GM12878 (cell line): ENCODE measurements at regions of chr14 and their contacts with region 1.

Region 1: GRCh38 chr14:89430391-89431236 is 13.6 kb upstream of the FOXN3 start:
- DNase-seq: peak; percentile 99
- ATAC-seq: peak; percentile 95
- H3K4me3 ChIP-seq: peak overlapping the region; percentile 29
- H3K27ac ChIP-seq: peak overlapping the region; percentile 97
- H3K4me1 ChIP-seq: peaks cover 49% of the 10 kb centered on the region
- H3K27me3 ChIP-seq: no peaks in the 10 kb centered on the region
- CTCF ChIP-seq: no peak
- EP300 ChIP-seq: peak; percentile 90 to 94
- POLR2A ChIP-seq: peak; percentile 37; the same call in 1 of the 2 replicates
- RAD21 ChIP-seq: peak; percentile 27; the same call in 1 of the 2 replicates

Region 2: GRCh38 chr14:89178802-89179535 is 251.6 kb before region 1 on chr14:
- CTCF ChIA-PET with region 1: interaction called, 7 read pairs
- POLR2A ChIA-PET with region 1: no interaction called
- RAD21 ChIA-PET with region 1: interaction called, 17 read pairs
- SMC1A ChIA-PET with region 1: interaction called, 9 read pairs
- in situ Hi-C with region 1: no loop called
- intact Hi-C with region 1: no loop called
- DNase-seq: no peak
- ATAC-seq: no peak
- H3K4me3 ChIP-seq: no peak overlapping the region
- H3K27ac ChIP-seq: no peak overlapping the region
- H3K4me1 ChIP-seq: peaks cover 8% of the 10 kb centered on the region
- H3K27me3 ChIP-seq: no peaks in the 10 kb centered on the region
- CTCF ChIP-seq: no peak
- EP300 ChIP-seq: no peak
- POLR2A ChIP-seq: no peak
- RAD21 ChIP-seq: no peak

Region 3: GRCh38 chr14:89416002-89416995 is 14.3 kb before region 1 on chr14:
- CTCF ChIA-PET with region 1: interaction called, 9 read pairs
- POLR2A ChIA-PET with region 1: interaction called, 9 read pairs
- RAD21 ChIA-PET with region 1: interaction called, 27 read pairs
- SMC1A ChIA-PET with region 1: interaction called, 5 read pairs
- in situ Hi-C with region 1: no loop called
- intact Hi-C with region 1: no loop called
- DNase-seq: peak; percentile 94
- ATAC-seq: peak; percentile 85
- H3K4me3 ChIP-seq: peak overlapping the region; percentile 85
- H3K27ac ChIP-seq: peak overlapping the region; percentile 91
- H3K4me1 ChIP-seq: peaks cover 6% of the 10 kb centered on the region
- H3K27me3 ChIP-seq: no peaks in the 10 kb centered on the region
- CTCF ChIP-seq: no peak
- EP300 ChIP-seq: no peak
- POLR2A ChIP-seq: peak; percentile 31; the same call in 1 of the 2 replicates
- RAD21 ChIP-seq: no peak

Region 4: DNA sequence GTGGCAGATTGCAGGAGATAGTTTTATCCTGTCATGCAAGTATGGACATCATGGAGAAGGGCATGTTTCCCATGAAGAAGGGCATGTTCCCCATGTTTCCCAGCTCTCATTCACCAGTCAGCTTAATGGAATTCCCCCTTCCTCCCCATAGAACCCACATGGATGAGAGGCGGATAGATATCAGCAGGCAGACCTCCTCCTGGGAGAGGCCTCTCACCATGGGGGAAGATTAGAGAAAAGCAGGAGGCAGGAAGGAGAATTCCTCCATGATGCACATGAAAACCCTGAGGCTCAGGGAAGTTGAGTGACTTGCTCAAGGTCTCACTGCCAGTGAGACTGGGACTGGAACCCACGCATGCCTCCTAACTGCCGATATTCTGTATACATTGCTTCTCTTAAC is 79.3 kb after region 1 on chr14:
- CTCF ChIA-PET with region 1: interaction called, 5 read pairs
- POLR2A ChIA-PET with region 1: no interaction called
- RAD21 ChIA-PET with region 1: interaction called, 5 read pairs
- SMC1A ChIA-PET with region 1: interaction called, 5 read pairs
- in situ Hi-C with region 1: no loop called
- intact Hi-C with region 1: loop called (anchors 2 kb)
- DNase-seq: no peak
- ATAC-seq: no peak
- H3K4me3 ChIP-seq: no peak overlapping the region
- H3K27ac ChIP-seq: peak overlapping the region; percentile 69
- H3K4me1 ChIP-seq: peaks cover 35% of the 10 kb centered on the region
- H3K27me3 ChIP-seq: no peaks in the 10 kb centered on the region
- CTCF ChIP-seq: no peak
- EP300 ChIP-seq: no peak
- POLR2A ChIP-seq: no peak
- RAD21 ChIP-seq: no peak

Region 5: GRCh38 chr14:89767861-89768268 is 337.3 kb after region 1 on chr14:
- CTCF ChIA-PET with region 1: no interaction called
- POLR2A ChIA-PET with region 1: interaction called, 3 read pairs
- RAD21 ChIA-PET with region 1: interaction called, 3 read pairs
- SMC1A ChIA-PET with region 1: no interaction called
- in situ Hi-C with region 1: loop called (anchors 5 kb)
- intact Hi-C with region 1: loop called (anchors 2 kb)
- DNase-seq: peak; percentile 65
- ATAC-seq: peak; percentile 94
- H3K4me3 ChIP-seq: no peak overlapping the region
- H3K27ac ChIP-seq: peak overlapping the region; percentile 56
- H3K4me1 ChIP-seq: peaks cover 22% of the 10 kb centered on the region
- H3K27me3 ChIP-seq: no peaks in the 10 kb centered on the region
- CTCF ChIP-seq: peak; percentile 75 to 87 (median 81)
- EP300 ChIP-seq: 0 out of 4 replicates have a peak, but pooled peaks of 1 of the 2 experiments have one; percentile 29
- POLR2A ChIP-seq: no peak
- RAD21 ChIP-seq: peak; percentile 95

Region 6: DNA sequence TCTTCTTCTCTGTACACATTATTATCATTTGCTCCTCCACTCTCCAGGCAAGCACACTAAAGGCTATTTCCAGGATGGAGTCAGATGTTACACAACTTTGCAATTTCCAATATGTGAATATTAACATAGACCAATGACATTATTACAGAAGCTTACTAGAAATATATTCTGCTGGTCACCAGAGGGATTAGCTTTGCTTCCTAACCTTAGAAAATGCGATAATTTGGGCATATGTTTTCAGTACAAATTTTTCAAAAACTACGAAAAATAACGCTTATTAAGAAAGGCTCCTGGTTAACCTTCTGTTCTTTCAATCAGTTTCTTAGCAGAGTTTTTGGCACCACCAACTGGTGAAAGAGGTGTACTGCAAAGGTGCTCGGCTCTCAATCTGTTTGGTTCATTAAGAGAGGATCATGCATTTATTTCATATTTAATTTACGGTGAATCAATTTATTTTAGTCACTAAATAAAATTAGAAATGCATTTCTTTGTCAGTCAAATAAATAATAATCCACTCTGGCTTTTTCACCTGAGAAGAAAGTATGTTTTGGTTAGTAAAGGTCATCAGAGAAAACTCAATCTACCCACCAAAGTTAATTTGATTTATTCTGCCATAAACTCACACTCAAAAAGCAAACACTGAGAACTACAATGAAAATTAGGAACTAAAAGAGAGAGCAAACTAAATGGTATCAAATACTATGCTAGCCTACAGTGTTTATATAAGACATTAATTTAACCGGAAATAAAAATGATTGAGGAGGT is 484.7 kb after region 1 on chr14:
- CTCF ChIA-PET with region 1: no interaction called
- POLR2A ChIA-PET with region 1: no interaction called
- RAD21 ChIA-PET with region 1: no interaction called
- SMC1A ChIA-PET with region 1: interaction called, 3 read pairs
- in situ Hi-C with region 1: no loop called
- intact Hi-C with region 1: loop called (anchors 5 kb)
- DNase-seq: peak; percentile 25
- ATAC-seq: peak; percentile 75
- H3K4me3 ChIP-seq: no peak overlapping the region
- H3K27ac ChIP-seq: no peak overlapping the region
- H3K4me1 ChIP-seq: no peaks in the 10 kb centered on the region
- H3K27me3 ChIP-seq: no peaks in the 10 kb centered on the region
- CTCF ChIP-seq: peak; percentile 85 to 92 (median 87)
- EP300 ChIP-seq: no peak
- POLR2A ChIP-seq: no peak
- RAD21 ChIP-seq: peak; percentile 96